Ascending aorta (tissue), 2 donors: ENCODE measurements at regions of chr4 and their contacts with region 1.

Region 1: GRCh38 chr4:98260579-98261290 is 449 bp upstream of the RAP1GDS1 start:
- DNase-seq: peak; percentile 76 to 96
- H3K4me3 ChIP-seq: peak overlapping the region; percentile 94 to 96
- H3K27ac ChIP-seq: peak overlapping the region; percentile 95 to 96
- H3K4me1 ChIP-seq: peaks cover 0 to 6% of the 10 kb centered on the region in 2 donors
- H3K27me3 ChIP-seq: no peaks in the 10 kb centered on the region
- CTCF ChIP-seq: no peak

Region 2: GRCh38 chr4:98143001-98143899 is 117.5 kb before region 1 on chr4 and contains the start of gene STPG2:
- intact Hi-C with region 1: loop called (anchors 2 kb)
- DNase-seq: peak; percentile 64 to 94
- H3K4me3 ChIP-seq: peak within 1 kb of the TSS; percentile 67 to 79
- H3K27ac ChIP-seq: peak within 1 kb of the TSS; percentile 62 to 77
- H3K4me1 ChIP-seq: no peaks in the 10 kb centered on the region
- H3K27me3 ChIP-seq: no peaks in the 10 kb centered on the region
- CTCF ChIP-seq: peak in 2 of 3 experiments; percentile 31 to 36
- total RNA-seq, gene STPG2: not detected

Region 3: DNA sequence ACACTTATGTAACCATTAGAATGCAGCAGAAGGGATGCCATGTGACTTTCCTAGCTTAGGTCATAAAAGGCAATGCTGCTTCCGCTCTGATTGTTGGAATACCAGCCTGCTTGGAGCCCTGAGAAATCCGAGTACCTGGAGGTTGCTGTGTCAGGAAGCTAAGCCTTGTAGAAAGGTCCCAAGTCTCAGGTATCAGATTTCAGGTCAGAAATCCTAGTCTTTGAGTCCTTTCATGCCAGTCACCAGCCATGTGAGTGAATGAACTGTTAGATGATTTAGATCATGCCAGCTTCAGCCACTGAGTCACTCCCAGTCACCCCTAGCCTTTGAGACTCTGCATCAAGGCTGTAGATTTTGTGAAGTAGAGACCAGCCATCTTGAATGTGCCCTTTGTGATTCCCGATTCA is 23.9 kb after region 1 on chr4:
- intact Hi-C with region 1: no loop called
- DNase-seq: no peak
- H3K4me3 ChIP-seq: no peak overlapping the region
- H3K27ac ChIP-seq: no peak overlapping the region
- H3K4me1 ChIP-seq: peaks cover 0 to 3% of the 10 kb centered on the region in 2 donors
- H3K27me3 ChIP-seq: no peaks in the 10 kb centered on the region
- CTCF ChIP-seq: no peak

Region 4: DNA sequence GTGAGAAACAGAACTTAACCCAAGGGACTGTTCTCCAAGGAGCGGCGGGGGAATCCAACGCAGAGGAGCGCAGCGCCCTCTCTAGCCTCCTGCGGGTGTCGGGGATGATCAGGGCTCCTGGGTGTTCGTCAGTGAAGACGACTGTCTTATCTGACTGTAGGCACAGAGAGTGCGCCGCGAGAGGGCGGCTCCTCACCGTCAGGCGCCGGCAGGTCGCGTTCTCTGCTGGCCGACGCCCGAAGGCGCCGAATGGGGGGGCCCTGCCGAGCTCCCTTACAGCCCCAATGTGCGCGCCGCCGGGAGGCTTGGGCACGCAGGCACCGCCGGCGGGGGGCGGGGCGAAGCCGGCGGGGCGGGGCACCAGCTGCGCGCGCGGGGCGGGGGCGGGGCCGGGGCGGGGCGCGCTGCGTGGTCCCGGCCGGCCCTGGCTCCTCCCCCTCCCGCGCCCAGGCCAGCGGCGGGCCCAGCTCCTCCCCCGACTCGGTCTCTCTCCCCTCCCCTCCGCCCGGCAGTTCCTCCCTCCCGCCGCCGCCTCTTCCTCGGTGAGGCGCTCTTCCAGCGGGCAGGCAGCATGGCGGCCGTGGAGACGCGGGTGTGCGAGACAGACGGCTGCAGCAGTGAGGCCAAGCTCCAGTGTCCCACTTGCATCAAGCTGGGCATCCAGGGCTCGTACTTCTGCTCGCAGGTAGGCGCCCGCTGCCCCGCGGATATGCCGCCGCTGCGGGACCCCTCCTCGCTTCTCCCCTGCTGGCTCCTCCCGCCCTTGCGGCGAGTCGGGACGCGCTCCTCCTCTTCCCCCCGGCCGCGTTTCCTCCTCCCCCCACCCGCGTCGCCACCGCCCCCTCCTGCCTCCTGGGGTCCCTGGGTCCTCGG is 734.7 kb after region 1 on chr4 and contains the start of gene METAP1:
- intact Hi-C with region 1: loop called (anchors 5 kb)
- DNase-seq: peak; percentile 82 to 96
- H3K4me3 ChIP-seq: peak within 1 kb of the TSS; percentile 91
- H3K27ac ChIP-seq: peak within 1 kb of the TSS; percentile 81 to 91
- H3K4me1 ChIP-seq: peaks cover 0 to 7% of the 10 kb centered on the region in 2 donors
- H3K27me3 ChIP-seq: no peaks in the 10 kb centered on the region
- CTCF ChIP-seq: peak; percentile 39 to 64 (median 58)
- total RNA-seq, gene METAP1: 53.2 TPM

Region 5: DNA sequence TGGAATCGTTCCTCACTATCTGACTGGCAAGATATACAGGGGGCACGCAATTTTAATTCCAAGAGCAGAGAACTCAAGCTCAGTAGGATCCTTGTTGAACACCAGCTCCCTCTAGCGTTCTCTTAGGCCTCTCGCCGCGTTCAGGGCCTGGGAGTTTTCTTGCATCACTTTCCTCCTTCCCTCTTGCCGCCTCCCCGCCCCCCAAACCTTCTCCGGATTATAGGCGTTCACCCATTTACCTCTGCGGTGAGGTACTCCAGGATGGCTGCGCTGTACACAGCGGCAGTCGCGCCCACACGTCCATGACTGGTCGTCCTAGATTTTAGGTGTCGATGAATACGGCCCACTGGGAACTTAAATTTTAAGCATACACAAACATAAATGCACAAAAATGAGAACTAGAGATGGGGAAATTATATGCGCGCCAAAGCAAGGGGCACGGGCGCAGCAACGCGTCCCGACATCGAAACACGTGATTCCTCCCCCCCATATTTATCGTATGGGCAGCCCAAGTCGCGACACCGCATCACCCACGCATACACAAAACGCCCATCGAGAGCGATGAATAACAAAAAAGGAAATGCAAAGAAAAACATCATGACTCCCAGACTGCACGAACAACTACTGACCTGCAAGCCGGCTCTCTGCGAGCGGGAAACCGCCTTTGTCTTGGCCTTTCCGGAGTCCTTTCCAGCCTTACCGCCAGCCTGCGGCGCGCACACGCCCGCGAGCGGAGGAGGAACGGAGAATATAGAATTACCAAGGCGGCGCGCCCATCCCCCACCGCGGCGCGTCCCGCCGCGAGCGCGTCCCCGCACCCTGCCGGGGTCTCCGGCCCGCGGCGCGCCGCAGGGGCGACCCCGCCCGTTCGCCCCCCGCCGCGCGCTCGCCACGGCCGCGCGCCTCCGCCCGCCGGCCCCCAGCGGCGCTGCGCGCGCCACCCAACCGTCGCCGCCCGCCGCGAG is 1688.6 kb after region 1 on chr4:
- intact Hi-C with region 1: loop called (anchors 2 kb)
- DNase-seq: peak; percentile 68 to 96
- H3K4me3 ChIP-seq: peak overlapping the region; percentile 69 to 93
- H3K27ac ChIP-seq: peak overlapping the region; percentile 97 to 99
- H3K4me1 ChIP-seq: peaks cover 0 to 12% of the 10 kb centered on the region in 2 donors
- H3K27me3 ChIP-seq: no peaks in the 10 kb centered on the region
- CTCF ChIP-seq: peak; percentile 61 to 89 (median 83)